Left ventricle myocardium superior (tissue), 1 donor: ENCODE measurements at regions of chr3 and their contacts with region 1.

Region 1: DNA sequence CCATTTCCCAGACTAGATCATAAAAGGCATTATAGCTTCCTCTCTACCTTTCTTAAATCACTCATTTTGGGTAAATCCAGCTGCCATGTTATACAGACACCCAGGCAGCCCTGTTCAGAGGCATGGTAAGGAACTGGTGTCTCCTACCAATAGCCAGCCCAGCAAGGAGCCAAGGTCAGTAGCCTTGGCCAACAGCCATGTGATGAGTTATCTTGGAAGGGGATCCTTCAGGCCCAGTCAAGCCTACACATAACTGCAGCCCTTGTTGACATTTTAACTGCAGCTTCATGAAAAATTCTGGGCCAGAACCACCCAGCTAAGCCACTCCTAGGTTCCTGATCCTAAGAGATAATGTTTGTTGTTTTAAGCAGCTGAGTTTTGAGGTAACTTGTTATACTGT is 29.0 kb upstream of the ZMAT3 start:
- DNase-seq: no peak
- ATAC-seq: no peak

Region 2: GRCh38 chr3:179015551-179016020 is 85.1 kb before region 1 on chr3:
- intact Hi-C with region 1: loop called (anchors 10 kb)
- DNase-seq: no peak
- ATAC-seq: peak; percentile 59

Region 3: DNA sequence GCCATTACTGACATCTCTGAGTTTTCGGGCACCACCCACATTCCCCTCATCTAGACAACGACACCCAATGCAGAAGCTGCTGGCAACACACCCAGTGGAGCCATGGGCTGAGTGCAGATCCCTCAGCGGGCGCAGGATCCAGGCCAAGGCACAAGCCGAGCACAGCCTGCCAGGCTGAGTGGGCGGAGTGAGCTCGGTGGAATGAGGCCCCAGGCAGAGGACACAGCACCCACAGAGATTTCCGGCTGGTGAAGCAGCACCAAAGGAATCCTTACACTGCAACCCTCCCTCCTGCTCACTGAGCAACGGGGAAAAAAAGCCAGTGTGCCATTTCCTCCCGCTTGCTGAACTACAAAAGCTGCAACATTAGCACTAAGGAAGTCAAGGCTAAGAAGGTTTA is 63.3 kb before region 1 on chr3:
- intact Hi-C with region 1: no loop called
- DNase-seq: peak; percentile 64
- ATAC-seq: peak; percentile 95

Region 4: DNA sequence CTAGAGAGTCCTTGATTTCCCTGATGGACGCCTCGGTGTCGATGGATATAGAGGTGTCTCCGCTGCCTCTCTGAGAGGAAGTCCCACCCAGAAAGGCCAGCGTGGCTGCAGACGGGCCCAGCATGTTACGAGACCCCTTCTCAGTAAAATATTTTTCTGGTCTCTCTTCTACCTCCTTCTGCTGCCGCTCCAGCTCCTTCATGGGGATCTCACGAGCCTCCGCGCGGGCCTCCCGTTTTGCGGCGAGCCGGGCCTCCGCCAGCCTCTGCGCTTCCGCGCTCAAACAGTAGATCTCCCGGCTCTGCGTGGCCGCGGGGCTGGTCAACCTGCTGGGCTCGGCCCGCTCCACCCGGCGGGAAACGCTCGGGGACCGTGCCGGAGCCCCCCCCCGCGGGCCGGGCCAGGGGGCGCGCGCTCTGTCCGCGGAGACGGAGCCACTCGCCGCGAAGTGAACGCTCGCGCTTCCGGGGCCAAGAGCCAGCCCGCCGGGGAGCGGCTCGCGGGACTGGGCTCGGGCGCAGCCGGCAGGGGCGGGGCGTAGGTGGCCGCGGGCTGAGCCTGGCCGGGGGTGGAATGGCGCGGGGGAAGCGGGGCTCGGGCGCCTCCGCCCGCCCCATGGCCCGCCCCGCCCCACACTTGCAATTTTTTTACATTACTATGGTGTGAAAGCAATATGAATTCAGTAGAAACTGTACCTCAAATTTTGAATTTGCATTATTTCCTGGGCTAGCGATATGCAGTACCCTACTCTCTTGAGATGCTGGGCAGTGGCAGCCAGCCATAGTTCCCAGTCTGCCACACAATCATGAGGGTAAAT is 160.5 kb after region 1 on chr3:
- intact Hi-C with region 1: no loop called
- DNase-seq: peak; percentile 90
- ATAC-seq: peak; percentile 100

Region 5: GRCh38 chr3:179309225-179310078 is 208.8 kb after region 1 on chr3:
- intact Hi-C with region 1: loop called (anchors 10 kb)
- DNase-seq: no peak
- ATAC-seq: no peak